ENCODE measurements at regions of chr12 and their contacts with region 1.

Region 1: DNA sequence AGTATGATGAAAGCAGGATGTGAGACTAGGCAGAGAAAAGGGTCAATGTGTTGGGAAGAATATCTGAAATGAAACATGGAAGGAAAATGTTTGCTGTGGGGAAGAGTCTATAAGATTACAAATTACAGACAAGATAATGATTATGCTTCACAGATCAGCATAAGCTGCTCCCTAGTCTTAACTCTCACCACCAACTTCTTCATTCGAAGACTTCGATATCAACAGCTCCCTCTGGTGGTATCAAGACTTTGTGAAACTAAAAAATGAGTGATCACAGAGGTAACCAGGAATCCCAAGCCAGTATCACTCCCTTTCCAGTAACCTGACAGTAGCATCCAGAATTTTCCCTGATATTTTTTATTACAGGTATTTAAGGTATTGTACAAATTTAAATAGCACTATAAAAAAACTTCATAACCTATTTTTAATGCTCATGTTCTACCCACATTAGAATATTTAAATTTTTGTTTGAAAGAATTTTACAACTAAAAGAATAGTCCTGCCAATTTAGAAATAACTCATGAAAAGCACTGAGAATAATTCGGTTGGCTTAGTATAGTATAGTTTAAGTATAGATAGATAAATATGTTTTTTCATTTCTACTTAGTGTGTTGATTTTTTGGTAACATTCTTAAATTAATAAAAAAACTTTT is 84.4 kb downstream of the C2CD5 start:
- DNase-seq: no peak
- ATAC-seq: peak; percentile 85
- H3K4me3 ChIP-seq: no peak overlapping the region
- H3K27ac ChIP-seq: no peak overlapping the region
- H3K4me1 ChIP-seq: no peaks in the 10 kb centered on the region
- H3K27me3 ChIP-seq: no peaks in the 10 kb centered on the region
- CTCF ChIP-seq: peak; percentile 52 to 61 (median 59)
- EP300 ChIP-seq: no peak
- POLR2A ChIP-seq: no peak
- RAD21 ChIP-seq: peak; percentile 41; the same call in 1 of the 2 replicates

Region 2: GRCh38 chr12:21697904-21698630 is 761.9 kb before region 1 on chr12:
- CTCF ChIA-PET with region 1: interaction called, 10 read pairs
- POLR2A ChIA-PET with region 1: no interaction called
- RAD21 ChIA-PET with region 1: no interaction called
- SMC1A ChIA-PET with region 1: interaction called, 4 read pairs
- in situ Hi-C with region 1: no loop called
- intact Hi-C with region 1: loop called (anchors 5 kb)
- DNase-seq: no peak
- ATAC-seq: no peak
- H3K4me3 ChIP-seq: no peak overlapping the region
- H3K27ac ChIP-seq: no peak overlapping the region
- H3K4me1 ChIP-seq: no peaks in the 10 kb centered on the region
- H3K27me3 ChIP-seq: no peaks in the 10 kb centered on the region
- CTCF ChIP-seq: peak; percentile 13 to 54 (median 39); a peak in 4 of 6 replicates
- EP300 ChIP-seq: no peak
- POLR2A ChIP-seq: no peak
- RAD21 ChIP-seq: peak; percentile 53

Region 3: GRCh38 chr12:22083167-22083566 is 376.8 kb before region 1 on chr12:
- CTCF ChIA-PET with region 1: interaction called, 6 read pairs
- POLR2A ChIA-PET with region 1: no interaction called
- RAD21 ChIA-PET with region 1: interaction called, 3 read pairs
- SMC1A ChIA-PET with region 1: interaction called, 6 read pairs
- in situ Hi-C with region 1: no loop called
- intact Hi-C with region 1: loop called (anchors 5 kb)
- DNase-seq: no peak
- ATAC-seq: peak; percentile 55
- H3K4me3 ChIP-seq: no peak overlapping the region
- H3K27ac ChIP-seq: no peak overlapping the region
- H3K4me1 ChIP-seq: no peaks in the 10 kb centered on the region
- H3K27me3 ChIP-seq: no peaks in the 10 kb centered on the region
- CTCF ChIP-seq: peak; percentile 16 to 50 (median 27); a peak in 3 of 6 replicates
- EP300 ChIP-seq: no peak
- POLR2A ChIP-seq: no peak
- RAD21 ChIP-seq: peak; percentile 66

Region 4: GRCh38 chr12:22100958-22101748 is 358.8 kb before region 1 on chr12:
- CTCF ChIA-PET with region 1: interaction called, 11 read pairs
- POLR2A ChIA-PET with region 1: no interaction called
- RAD21 ChIA-PET with region 1: no interaction called
- SMC1A ChIA-PET with region 1: interaction called, 6 read pairs
- in situ Hi-C with region 1: no loop called
- intact Hi-C with region 1: loop called (anchors 5 kb)
- DNase-seq: peak; percentile 13
- ATAC-seq: peak; percentile 86
- H3K4me3 ChIP-seq: no peak overlapping the region
- H3K27ac ChIP-seq: no peak overlapping the region
- H3K4me1 ChIP-seq: peaks cover 2% of the 10 kb centered on the region; the same call in 1 of the 2 replicates
- H3K27me3 ChIP-seq: no peaks in the 10 kb centered on the region
- CTCF ChIP-seq: peak; percentile 49 to 58 (median 56); a peak in 5 of 6 replicates
- EP300 ChIP-seq: no peak
- POLR2A ChIP-seq: no peak
- RAD21 ChIP-seq: peak; percentile 63

Region 5: DNA sequence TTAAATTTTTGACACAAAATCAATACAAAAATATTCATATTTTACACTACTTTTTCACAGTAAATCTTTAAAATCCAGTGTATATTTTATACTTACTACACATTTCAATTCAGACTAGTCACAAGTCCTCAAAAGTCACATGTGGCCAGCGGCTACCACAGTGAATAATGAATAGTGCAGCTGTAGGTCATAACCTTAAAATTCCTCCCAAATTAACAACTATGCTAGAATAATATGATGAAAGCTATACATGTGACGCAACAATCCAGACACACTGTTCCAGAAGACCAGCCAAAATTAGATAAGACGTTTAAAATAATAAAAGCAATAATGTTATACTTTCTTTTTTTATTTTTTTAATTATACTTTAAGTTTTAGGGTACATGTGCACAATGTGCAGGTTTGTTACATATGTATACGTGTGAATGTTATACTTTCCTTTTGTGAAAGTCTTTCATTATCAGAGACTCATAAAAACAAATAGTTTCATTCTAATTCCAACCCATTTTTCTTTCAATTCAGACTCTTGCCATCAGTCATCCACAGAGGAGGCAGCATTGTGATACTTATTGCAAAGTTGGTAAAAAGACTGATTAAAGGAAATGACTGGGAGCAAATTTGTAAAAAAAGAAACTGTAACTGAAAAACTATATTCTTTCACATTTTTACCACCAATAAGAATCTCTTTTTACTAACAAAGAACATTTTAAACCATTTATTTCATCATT is 17.4 kb after region 1 on chr12:
- CTCF ChIA-PET with region 1: interaction called, 24 read pairs
- POLR2A ChIA-PET with region 1: no interaction called
- RAD21 ChIA-PET with region 1: interaction called, 3 read pairs
- SMC1A ChIA-PET with region 1: interaction called, 7 read pairs
- in situ Hi-C with region 1: no loop called
- intact Hi-C with region 1: no loop called
- DNase-seq: no peak
- ATAC-seq: no peak
- H3K4me3 ChIP-seq: no peak overlapping the region
- H3K27ac ChIP-seq: 0 out of 2 replicates have a peak overlapping the region, but pooled peaks have one; percentile 27
- H3K4me1 ChIP-seq: no peaks in the 10 kb centered on the region; the same call in 1 of the 2 replicates
- H3K27me3 ChIP-seq: no peaks in the 10 kb centered on the region
- CTCF ChIP-seq: no peak
- EP300 ChIP-seq: no peak
- POLR2A ChIP-seq: no peak
- RAD21 ChIP-seq: no peak

Region 6: GRCh38 chr12:22670762-22671161 is 210.8 kb after region 1 on chr12:
- CTCF ChIA-PET with region 1: interaction called, 11 read pairs
- POLR2A ChIA-PET with region 1: no interaction called
- RAD21 ChIA-PET with region 1: interaction called, 3 read pairs
- SMC1A ChIA-PET with region 1: interaction called, 6 read pairs
- in situ Hi-C with region 1: no loop called
- intact Hi-C with region 1: no loop called
- DNase-seq: no peak
- ATAC-seq: no peak
- H3K4me3 ChIP-seq: no peak overlapping the region
- H3K27ac ChIP-seq: no peak overlapping the region
- H3K4me1 ChIP-seq: no peaks in the 10 kb centered on the region
- H3K27me3 ChIP-seq: no peaks in the 10 kb centered on the region
- CTCF ChIP-seq: no peak; a peak in 1 of 6 replicates
- EP300 ChIP-seq: no peak
- POLR2A ChIP-seq: no peak
- RAD21 ChIP-seq: peak; percentile 19; the same call in 1 of the 2 replicates

Region 7: DNA sequence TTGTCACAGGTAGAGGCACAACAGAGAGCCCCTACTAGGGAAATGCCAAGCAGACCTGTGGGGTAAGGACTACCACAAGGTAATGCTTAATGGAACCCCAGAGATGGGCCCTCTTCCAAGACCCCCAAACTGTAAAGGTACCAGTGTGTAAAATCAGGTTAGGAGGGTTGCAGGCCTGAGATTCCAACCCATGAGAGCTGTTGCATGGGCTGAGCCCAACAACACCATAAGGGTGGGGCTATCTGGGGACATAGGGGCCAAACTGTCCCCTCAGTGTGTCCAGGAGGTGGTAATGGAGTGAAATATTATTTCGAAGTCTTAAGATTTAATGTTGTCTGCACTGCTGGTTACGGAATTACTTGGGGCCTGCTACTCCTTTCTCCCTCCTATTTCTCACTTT is 785.2 kb after region 1 on chr12:
- CTCF ChIA-PET with region 1: no interaction called
- POLR2A ChIA-PET with region 1: no interaction called
- RAD21 ChIA-PET with region 1: no interaction called
- SMC1A ChIA-PET with region 1: no interaction called
- in situ Hi-C with region 1: no loop called
- intact Hi-C with region 1: no loop called
- DNase-seq: no peak
- ATAC-seq: no peak
- H3K4me3 ChIP-seq: no peak overlapping the region
- H3K27ac ChIP-seq: no peak overlapping the region
- H3K4me1 ChIP-seq: no peaks in the 10 kb centered on the region
- H3K27me3 ChIP-seq: no peaks in the 10 kb centered on the region
- CTCF ChIP-seq: no peak
- EP300 ChIP-seq: no peak
- POLR2A ChIP-seq: no peak
- RAD21 ChIP-seq: no peak